WTC11 (cell line): ENCODE measurements at regions of chr5 and their contacts with region 1.

Region 1: GRCh38 chr5:177425801-177426565 is 493 bp upstream of the GRK6 start:
- DNase-seq: peak; percentile 100
- ATAC-seq: peak; percentile 94
- H3K4me3 Mint-ChIP-seq: peak overlapping the region; percentile 84
- H3K27ac Mint-ChIP-seq: peak overlapping the region; percentile 98
- H3K4me1 Mint-ChIP-seq: peaks cover 18% of the 10 kb centered on the region
- H3K27me3 Mint-ChIP-seq: peaks cover 5% of the 10 kb centered on the region
- CTCF ChIP-seq: no peak

Region 2: GRCh38 chr5:177446200-177447065 is 20.4 kb after region 1 on chr5 and contains the start of gene PRR7:
- CTCF ChIA-PET with region 1: interaction called, 8 read pairs
- POLR2A ChIA-PET with region 1: interaction called, 19 read pairs
- DNase-seq: peak; percentile 60
- ATAC-seq: peak; percentile 14
- H3K4me3 Mint-ChIP-seq: peak within 1 kb of the TSS; percentile 66
- H3K27ac Mint-ChIP-seq: no peak within 1 kb of the TSS
- H3K4me1 Mint-ChIP-seq: peaks cover 44% of the 10 kb centered on the region
- H3K27me3 Mint-ChIP-seq: peaks cover 41% of the 10 kb centered on the region
- CTCF ChIP-seq: no peak
- total RNA-seq, gene PRR7: 13.1 to 14.7 TPM (median 14.6 TPM) in 3 replicates

Region 3: GRCh38 chr5:177465044-177465443 is 39.1 kb after region 1 on chr5:
- CTCF ChIA-PET with region 1: no interaction called
- POLR2A ChIA-PET with region 1: no interaction called
- DNase-seq: no peak
- ATAC-seq: no peak
- H3K4me3 Mint-ChIP-seq: no peak overlapping the region
- H3K27ac Mint-ChIP-seq: no peak overlapping the region
- H3K4me1 Mint-ChIP-seq: peaks cover 8% of the 10 kb centered on the region
- H3K27me3 Mint-ChIP-seq: no peaks in the 10 kb centered on the region
- CTCF ChIP-seq: no peak